ENCODE measurements at regions of chr7 and their contacts with region 1.

Region 1: GRCh38 chr7:154927624-154928143 is 75.2 kb downstream of the PAXIP1 start:
- DNase-seq: peak in 7 of 10 donors; percentile 65 to 87 (median 75)

Region 2: GRCh38 chr7:154867068-154867467 is 60.6 kb before region 1 on chr7:
- intact Hi-C with region 1: no loop called
- DNase-seq: peak in 2 of 10 donors; percentile 45 to 59

Region 3: DNA sequence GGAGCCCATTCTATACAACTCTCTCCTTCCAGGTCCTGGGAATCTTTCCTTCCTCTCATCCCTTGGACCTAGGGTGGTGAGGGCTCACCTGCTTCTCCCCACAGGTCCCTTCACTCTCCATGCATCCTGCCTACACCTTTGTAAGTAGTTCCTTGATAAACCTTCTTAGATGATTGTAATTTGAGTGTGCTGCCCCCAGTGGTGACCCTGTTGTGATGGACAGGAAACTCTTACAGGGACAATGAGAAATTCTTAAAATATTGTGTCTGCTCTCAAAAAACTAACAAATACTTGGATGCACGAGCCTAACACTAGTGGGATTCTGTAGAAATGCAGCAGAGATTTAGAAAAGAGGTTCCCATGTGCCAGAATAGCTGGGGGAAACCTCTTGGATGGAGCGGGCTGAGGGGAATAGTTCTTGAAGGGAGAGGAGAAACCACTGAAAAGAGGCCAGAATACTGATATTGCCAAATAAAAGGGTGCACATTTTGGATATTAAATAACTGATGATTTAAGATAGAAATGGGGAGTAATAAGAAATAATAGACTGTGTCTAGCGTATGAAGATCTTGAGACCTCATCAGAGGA is 82.0 kb after region 1 on chr7:
- intact Hi-C with region 1: loop called (anchors 5 kb)
- DNase-seq: no peak

Region 4: GRCh38 chr7:155190688-155191087 is 263.0 kb after region 1 on chr7:
- intact Hi-C with region 1: loop called (anchors 10 kb)
- DNase-seq: peak in 6 of 10 donors; percentile 26 to 91 (median 68)

Region 5: DNA sequence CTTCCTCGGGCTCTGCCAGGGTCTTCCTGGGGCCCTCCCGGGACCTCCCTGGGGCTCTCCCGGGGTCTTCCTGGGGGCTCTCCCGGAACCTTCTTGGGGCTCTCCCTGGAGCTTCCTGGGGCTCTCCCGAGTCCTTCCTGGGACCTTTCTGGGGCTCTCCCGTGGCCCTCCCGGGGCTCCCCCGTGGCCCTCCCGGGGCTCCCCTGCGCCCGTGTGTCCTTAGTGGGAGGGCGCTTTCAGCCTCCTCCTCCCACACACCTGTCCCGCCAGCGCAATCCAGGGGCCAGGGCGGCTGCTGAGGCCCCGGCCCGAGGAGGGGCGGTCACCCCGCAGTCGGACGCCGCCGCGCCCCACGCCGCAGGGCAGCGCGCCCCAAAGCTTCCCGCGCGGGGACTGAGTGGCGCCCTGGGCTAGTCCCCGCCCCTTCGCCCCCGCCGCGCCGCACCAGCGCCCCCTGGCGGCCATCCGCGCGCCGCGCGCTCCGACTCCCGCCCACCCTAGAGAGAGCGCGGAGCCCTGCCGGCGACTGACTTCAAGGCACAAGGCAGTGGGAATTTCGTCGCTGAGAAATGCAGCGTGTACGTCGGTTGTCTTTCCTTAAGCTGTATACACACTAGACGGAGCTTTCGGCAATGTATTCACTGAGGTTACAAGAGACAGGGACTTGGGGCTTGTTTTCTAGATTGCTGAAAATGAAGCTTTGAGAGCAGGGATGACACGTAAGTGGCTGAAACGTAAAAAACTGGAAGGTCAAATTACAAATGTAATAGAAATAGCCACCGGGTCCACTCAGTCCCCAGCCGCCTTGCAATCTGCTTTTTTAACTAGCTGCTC is 417.1 kb after region 1 on chr7:
- intact Hi-C with region 1: loop called (anchors 2 kb)
- DNase-seq: peak; percentile 44 to 96 (median 80)

Measured in posterior cingulate gyrus (tissue), 11 donors.